Natural killer cell (primary cell): ENCODE measurements at regions of chr1 and their contacts with region 1.

Region 1: DNA sequence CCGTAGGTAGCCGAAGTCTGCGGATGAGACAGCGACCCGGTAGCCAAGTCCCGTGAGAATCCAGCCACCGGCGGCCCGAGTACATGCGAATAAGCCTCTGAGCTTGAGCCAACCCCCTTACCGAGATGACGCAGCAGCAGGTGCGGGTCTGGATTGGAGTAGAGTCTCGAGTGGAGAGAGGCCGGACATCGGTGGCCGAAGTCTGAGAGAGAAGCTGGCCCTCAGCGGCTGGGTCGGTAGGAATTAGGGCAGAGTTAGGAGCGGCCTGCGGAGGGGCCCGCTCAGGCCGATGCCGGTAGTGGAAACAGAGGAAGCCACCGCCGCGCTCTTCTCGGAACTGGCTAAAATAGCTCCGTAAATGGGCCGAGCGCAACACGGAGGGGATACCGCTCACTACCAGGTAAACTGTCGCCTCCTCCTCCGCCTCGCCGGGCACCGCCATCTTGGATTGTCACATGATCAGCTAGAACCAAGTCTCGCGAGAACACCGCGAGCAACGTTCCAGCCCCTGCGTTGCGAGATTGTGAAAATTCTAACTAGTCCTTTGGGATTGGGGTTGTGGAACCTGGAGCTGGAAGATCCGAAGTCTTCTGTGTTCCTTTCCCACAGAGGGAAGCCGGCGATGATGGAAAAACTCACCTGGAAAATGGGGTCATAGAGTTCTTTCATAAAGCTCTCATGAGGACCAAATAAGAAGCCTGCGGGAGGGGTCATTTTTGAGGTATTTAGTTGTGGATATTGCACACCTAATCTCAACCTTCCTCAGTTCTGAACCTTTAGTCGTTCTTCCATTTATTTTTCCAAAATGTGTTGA is at the start of gene GPATCH3:
- DNase-seq: peak; percentile 79 to 96
- ATAC-seq: peak; percentile 91 to 93 (median 92)
- H3K4me3 ChIP-seq: peak within 1 kb of the TSS; percentile 92
- H3K4me3 Mint-ChIP-seq: peak within 1 kb of the TSS; percentile 97
- H3K27ac ChIP-seq: peak within 1 kb of the TSS; percentile 87
- H3K27ac Mint-ChIP-seq: peak within 1 kb of the TSS; percentile 95 to 96
- H3K4me1 ChIP-seq: peaks cover 14% of the 10 kb centered on the region
- H3K4me1 Mint-ChIP-seq: peaks cover 24 to 28% of the 10 kb centered on the region in 2 donors
- H3K27me3 ChIP-seq: no peaks in the 10 kb centered on the region
- H3K27me3 Mint-ChIP-seq: no peaks in the 10 kb centered on the region
- CTCF ChIP-seq: no peak
- total RNA-seq, gene GPATCH3: 25.5 to 41.3 (median 34.6) TPM

Region 2: DNA sequence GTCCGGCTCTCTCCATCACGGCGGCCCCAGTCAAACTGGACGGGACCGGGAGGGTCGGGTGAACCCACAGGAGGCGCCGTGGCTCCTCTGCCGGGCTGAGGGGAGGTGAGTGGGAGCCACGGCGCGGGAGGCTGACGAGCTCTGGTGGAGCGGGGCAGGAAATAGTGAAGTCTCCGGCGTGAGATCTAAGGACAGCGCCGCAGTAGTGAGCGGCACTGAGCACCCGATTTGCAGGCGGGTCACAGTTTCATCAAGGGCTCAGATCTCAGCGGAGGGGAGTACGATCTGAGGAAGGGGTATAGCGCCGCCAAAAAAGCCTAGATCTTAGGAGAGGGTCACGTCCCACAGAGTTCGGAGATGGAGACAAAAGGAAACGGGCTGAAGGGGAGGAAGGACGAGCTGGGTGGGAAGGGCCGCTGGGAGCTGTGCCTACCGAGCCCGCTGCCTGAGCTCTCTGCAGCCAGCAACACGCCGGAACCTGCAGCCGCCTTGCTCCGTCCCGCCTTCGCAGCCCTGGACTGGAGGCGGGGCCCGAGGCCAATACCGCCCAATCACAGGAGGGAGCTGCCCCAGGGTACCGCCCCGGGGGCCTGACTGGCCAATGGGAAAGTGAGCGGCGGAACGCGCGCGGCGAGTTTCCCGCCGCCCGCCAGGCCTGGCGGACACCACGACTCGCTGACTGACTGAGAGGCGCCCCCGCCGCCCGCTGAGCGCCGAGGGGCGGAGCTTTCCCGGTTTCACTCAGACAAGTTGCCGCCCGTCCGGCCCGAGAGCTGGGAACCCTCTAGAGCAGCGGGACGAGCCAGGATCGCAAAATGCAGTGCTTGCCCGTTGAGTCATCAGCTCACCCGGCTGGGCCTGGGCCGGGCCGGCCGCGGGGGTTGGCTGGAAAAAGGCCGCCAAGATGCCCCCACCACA is 35.3 kb before region 1 on chr1:
- intact Hi-C with region 1: loop called (anchors 1 kb)
- DNase-seq: peak; percentile 96 to 97
- ATAC-seq: peak; percentile 96 to 99 (median 96)
- H3K4me3 ChIP-seq: peak overlapping the region; percentile 88
- H3K4me3 Mint-ChIP-seq: peak overlapping the region; percentile 94
- H3K27ac ChIP-seq: peak overlapping the region; percentile 75
- H3K27ac Mint-ChIP-seq: peak overlapping the region; percentile 86 to 91
- H3K4me1 ChIP-seq: peaks cover 24% of the 10 kb centered on the region
- H3K4me1 Mint-ChIP-seq: peaks cover 8 to 18% of the 10 kb centered on the region in 2 donors
- H3K27me3 ChIP-seq: no peaks in the 10 kb centered on the region
- H3K27me3 Mint-ChIP-seq: no peaks in the 10 kb centered on the region
- CTCF ChIP-seq: no peak

Region 3: GRCh38 chr1:26921540-26922430 is 21.6 kb after region 1 on chr1 and contains the start of gene NUDC:
- intact Hi-C with region 1: loop called (anchors 1 kb)
- DNase-seq: peak; percentile 93 to 98
- ATAC-seq: peak; percentile 92 to 98 (median 94)
- H3K4me3 ChIP-seq: peak within 1 kb of the TSS; percentile 69
- H3K4me3 Mint-ChIP-seq: peak within 1 kb of the TSS; percentile 97
- H3K27ac ChIP-seq: peak within 1 kb of the TSS; percentile 84
- H3K27ac Mint-ChIP-seq: peak within 1 kb of the TSS; percentile 93 to 97
- H3K4me1 ChIP-seq: peaks cover 18% of the 10 kb centered on the region
- H3K4me1 Mint-ChIP-seq: peaks cover 34 to 35% of the 10 kb centered on the region in 2 donors
- H3K27me3 ChIP-seq: no peaks in the 10 kb centered on the region
- H3K27me3 Mint-ChIP-seq: no peaks in the 10 kb centered on the region
- CTCF ChIP-seq: no peak
- total RNA-seq, gene NUDC: 43.6 to 46.6 (median 43.7) TPM